ENCODE measurements at regions of chr22 and their contacts with region 1.

Region 1: DNA sequence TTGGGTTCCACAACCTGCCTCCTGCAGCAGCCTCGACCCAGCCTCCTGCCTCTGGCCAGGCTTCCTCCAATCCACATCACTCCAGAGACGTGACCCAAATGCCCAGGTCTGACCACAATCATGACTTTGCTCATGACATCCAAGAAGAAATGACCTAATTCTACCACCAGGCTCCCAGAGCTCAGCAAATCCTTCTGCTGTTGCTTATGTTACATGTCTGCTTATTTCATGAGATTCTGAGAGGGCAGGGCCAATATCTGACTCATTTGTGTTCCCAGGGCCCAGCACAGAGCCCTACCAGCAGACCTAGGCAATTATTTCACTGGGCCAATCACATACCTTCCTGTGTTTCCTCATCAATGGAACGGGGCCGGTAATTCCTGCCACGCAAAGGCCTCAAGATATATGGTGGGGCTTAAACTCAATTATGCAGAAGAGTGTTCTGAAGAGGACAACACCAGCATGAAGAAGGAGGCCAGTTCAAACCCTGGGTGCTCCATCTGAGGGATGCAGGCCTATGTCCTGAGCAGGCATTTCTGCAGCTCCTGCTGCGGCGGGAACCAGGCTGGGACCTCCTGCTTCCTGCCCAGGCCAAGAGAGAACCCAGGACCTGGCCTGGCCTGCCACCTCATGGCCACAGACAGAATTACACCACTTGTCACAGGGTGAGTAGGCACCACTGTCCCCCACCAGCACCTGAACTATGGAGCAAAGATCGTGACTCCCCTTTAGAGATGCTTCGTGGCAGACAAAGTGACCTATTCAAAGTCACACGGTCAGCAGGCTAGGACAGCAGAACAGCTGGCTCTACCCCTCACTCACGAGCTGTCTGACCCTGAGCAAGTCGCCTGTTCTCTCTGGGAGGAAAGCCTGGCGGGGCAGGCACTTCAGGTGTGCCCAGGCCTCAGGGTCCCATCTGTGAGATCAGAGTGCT is 5.9 kb downstream of the CENPM start:
- DNase-seq: peak; percentile 78
- H3K4me3 Mint-ChIP-seq: peak overlapping the region; percentile 7
- H3K27ac Mint-ChIP-seq: peak overlapping the region; percentile 91
- H3K4me1 Mint-ChIP-seq: peaks cover 24% of the 10 kb centered on the region
- H3K27me3 Mint-ChIP-seq: no peaks in the 10 kb centered on the region
- CTCF ChIP-seq: peak; percentile 95

Region 2: DNA sequence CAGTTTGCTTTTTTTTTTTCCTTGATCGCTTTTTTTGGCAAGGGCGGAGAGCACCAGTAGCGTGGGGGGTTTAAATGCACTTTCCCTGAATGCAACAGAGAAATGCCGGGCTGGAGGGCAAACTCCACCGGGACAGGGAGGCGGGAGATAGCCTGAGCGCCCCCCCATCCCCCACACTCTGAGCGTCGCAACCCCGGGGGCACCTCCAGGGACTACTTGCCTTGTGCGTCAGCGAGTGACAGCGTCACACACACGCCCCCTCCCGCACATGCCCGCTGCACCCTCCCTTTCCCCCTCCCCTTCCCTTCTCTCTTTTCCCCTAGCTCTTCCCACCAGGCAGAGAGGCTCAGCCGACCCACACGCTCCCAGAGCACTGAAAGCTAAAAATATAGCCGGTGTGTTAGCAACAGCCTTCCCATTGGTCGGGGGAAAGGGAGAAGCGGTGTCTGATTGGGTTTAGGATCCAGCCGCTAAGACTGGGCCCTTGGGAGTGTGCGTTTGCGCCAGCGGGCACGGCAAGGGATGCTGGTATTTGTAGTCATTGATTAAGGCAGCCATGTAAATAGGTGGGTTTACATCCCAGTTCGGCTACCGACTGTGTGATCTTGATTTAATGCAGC is 492.8 kb before region 1 on chr22:
- CTCF ChIA-PET with region 1: no interaction called
- POLR2A ChIA-PET with region 1: no interaction called
- intact Hi-C with region 1: no loop called
- DNase-seq: peak; percentile 100
- H3K4me3 Mint-ChIP-seq: peak overlapping the region; percentile 96
- H3K27ac Mint-ChIP-seq: peak overlapping the region; percentile 97
- H3K4me1 Mint-ChIP-seq: peaks cover 11% of the 10 kb centered on the region
- H3K27me3 Mint-ChIP-seq: no peaks in the 10 kb centered on the region
- CTCF ChIP-seq: no peak

Region 3: DNA sequence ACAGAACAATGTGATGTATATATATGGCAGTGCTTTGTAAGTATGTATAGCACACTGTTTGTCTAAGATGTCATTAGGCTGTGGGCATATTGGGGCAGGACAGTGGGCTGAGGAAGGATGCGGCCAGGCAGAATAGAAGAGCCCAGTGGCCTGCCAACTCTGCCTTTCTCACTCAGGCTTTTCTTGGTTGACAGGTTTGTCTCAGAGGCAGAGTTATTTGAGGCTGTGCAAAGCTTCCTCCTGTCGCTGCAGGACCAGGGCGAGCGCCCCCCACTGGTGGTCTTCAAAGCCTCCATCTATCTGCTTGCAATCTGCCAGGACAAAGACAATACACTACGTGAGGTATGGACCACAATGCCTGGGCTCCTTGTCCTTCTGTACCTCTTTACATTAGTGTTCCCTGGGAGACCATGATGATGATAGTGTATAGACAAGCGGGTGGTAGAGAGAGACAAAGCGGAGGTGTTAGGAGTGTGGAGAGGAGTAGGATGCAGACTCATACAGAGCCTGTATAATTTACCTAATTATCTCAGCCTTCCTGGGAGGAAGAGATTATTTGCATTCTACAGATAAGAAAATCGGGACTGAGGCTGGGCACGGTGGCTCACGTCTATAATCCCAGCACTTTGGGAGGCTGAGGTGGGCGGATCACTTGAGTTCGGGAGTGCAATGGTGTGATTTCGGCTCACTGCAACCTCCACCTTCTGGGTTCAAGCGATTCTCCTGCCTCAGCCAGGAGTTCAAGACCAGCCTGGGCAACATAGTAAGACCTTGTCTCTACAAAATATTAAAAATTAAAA is 177.9 kb before region 1 on chr22:
- CTCF ChIA-PET with region 1: no interaction called
- POLR2A ChIA-PET with region 1: no interaction called
- intact Hi-C with region 1: no loop called
- DNase-seq: peak; percentile 36
- H3K4me3 Mint-ChIP-seq: no peak overlapping the region
- H3K27ac Mint-ChIP-seq: no peak overlapping the region
- H3K4me1 Mint-ChIP-seq: peaks cover 6% of the 10 kb centered on the region
- H3K27me3 Mint-ChIP-seq: no peaks in the 10 kb centered on the region
- CTCF ChIP-seq: peak; percentile 27

Region 4: GRCh38 chr22:41822317-41823060 is 118.6 kb before region 1 on chr22:
- CTCF ChIA-PET with region 1: interaction called, 24 read pairs
- POLR2A ChIA-PET with region 1: interaction called, 6 read pairs
- intact Hi-C with region 1: loop called (anchors 1 kb)
- DNase-seq: peak; percentile 71
- H3K4me3 Mint-ChIP-seq: no peak overlapping the region
- H3K27ac Mint-ChIP-seq: peak overlapping the region; percentile 1
- H3K4me1 Mint-ChIP-seq: no peaks in the 10 kb centered on the region
- H3K27me3 Mint-ChIP-seq: no peaks in the 10 kb centered on the region
- CTCF ChIP-seq: peak; percentile 51

Region 5: GRCh38 chr22:41832553-41833368 is 108.3 kb before region 1 on chr22 and contains the start of gene SREBF2:
- CTCF ChIA-PET with region 1: interaction called, 18 read pairs
- POLR2A ChIA-PET with region 1: interaction called, 7 read pairs
- intact Hi-C with region 1: no loop called
- DNase-seq: peak; percentile 100
- H3K4me3 Mint-ChIP-seq: peak within 1 kb of the TSS; percentile 82
- H3K27ac Mint-ChIP-seq: peak within 1 kb of the TSS; percentile 98
- H3K4me1 Mint-ChIP-seq: peaks cover 17% of the 10 kb centered on the region
- H3K27me3 Mint-ChIP-seq: no peaks in the 10 kb centered on the region
- CTCF ChIP-seq: no peak
- total RNA-seq, gene SREBF2: 88.4 and 104 TPM in 2 replicates

Region 6: DNA sequence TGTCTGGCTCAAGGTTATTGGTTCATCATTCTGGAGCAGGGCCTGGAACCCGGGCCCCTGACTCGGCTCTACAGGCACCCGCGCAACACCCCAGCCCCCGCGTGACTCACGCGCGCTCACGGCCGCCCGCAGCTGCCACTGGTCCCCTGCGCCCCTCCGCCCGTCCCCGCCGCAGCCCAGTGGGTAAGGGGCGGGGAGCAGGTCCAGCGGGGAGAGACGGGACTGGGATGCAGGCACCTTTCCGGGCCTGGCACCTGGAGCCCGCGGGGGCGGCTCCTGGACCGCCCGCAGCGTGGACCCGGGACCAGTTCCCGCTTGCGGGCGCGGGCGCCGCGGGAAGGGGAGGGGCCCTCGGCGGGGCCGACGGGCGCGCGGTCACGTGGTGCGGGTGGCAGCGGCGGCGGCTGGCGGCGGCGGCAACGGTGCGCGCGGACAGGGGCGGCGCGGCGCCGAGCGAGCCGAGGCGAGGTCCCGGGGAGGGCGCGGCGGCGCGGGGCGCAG is 35.4 kb after region 1 on chr22:
- CTCF ChIA-PET with region 1: no interaction called
- POLR2A ChIA-PET with region 1: no interaction called
- intact Hi-C with region 1: no loop called
- DNase-seq: no peak
- H3K4me3 Mint-ChIP-seq: peak overlapping the region; percentile 2
- H3K27ac Mint-ChIP-seq: no peak overlapping the region
- H3K4me1 Mint-ChIP-seq: no peaks in the 10 kb centered on the region
- H3K27me3 Mint-ChIP-seq: peaks cover 30% of the 10 kb centered on the region
- CTCF ChIP-seq: no peak